GM12878 (cell line): ENCODE measurements at regions of chr4 and their contacts with region 1.

Region 1: DNA sequence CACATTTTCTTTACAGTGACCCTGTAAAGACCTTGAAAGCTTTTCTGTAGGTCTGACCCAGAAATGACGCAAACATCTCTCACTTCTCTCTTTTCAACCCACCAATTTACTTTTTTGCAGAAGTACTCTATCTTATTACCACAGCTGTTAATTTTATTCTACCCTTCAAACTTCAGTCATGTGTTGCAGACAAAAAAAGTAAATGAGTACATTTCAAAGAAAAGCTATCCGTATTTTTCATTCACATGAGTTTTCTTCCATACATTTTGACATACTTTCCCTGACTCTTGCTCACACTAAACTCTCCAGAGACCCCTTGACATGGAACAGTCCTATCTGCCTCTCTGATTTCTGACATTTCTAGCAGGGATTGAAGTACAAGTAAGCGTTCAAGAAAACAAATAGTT is 51.7 kb downstream of the SLC7A11 start:
- DNase-seq: peak; percentile 66
- ATAC-seq: peak; percentile 89
- H3K4me3 ChIP-seq: no peak overlapping the region
- H3K27ac ChIP-seq: peak overlapping the region; percentile 93
- H3K4me1 ChIP-seq: peaks cover 22% of the 10 kb centered on the region
- H3K27me3 ChIP-seq: no peaks in the 10 kb centered on the region
- CTCF ChIP-seq: no peak
- EP300 ChIP-seq: peak; percentile 98
- POLR2A ChIP-seq: no peak
- RAD21 ChIP-seq: no peak

Region 2: DNA sequence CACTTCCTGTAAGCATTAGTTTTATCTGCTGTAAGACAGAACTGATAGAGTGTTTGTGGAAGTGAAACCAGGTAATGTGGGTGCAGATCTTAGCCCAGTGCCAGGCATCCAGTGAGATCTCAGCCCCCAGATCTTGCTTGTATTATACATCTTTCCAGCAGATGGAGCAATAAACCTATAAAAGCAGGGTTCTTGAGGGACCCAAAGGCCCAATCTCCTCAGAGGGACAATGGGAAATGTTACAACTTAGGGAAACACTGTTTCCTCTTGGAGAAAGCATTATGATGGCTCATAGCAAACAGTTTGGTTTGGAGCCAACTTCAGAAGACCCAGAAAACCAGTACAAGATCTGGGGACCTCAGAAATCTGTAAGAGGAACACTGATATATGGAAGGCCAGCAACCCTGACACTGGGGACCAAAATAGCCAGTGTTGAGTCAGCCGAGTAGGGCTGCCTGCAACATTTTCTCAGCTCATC is 154.6 kb before region 1 on chr4:
- CTCF ChIA-PET with region 1: interaction called, 15 read pairs
- POLR2A ChIA-PET with region 1: no interaction called
- RAD21 ChIA-PET with region 1: interaction called, 4 read pairs
- SMC1A ChIA-PET with region 1: interaction called, 5 read pairs
- in situ Hi-C with region 1: no loop called
- intact Hi-C with region 1: no loop called
- DNase-seq: peak; percentile 69
- ATAC-seq: peak; percentile 100
- H3K4me3 ChIP-seq: no peak overlapping the region
- H3K27ac ChIP-seq: no peak overlapping the region
- H3K4me1 ChIP-seq: no peaks in the 10 kb centered on the region
- H3K27me3 ChIP-seq: no peaks in the 10 kb centered on the region
- CTCF ChIP-seq: peak; percentile 44 to 71 (median 64); a peak in 5 of 6 replicates
- EP300 ChIP-seq: 0 out of 4 replicates have a peak, but pooled peaks of 1 of the 2 experiments have one; percentile 43
- POLR2A ChIP-seq: no peak
- RAD21 ChIP-seq: peak; percentile 86

Region 3: GRCh38 chr4:138114434-138114833 is 76.0 kb before region 1 on chr4:
- CTCF ChIA-PET with region 1: no interaction called
- POLR2A ChIA-PET with region 1: no interaction called
- RAD21 ChIA-PET with region 1: no interaction called
- SMC1A ChIA-PET with region 1: no interaction called
- in situ Hi-C with region 1: no loop called
- intact Hi-C with region 1: loop called (anchors 5 kb)
- DNase-seq: peak; percentile 45
- ATAC-seq: peak; percentile 100
- H3K4me3 ChIP-seq: no peak overlapping the region
- H3K27ac ChIP-seq: no peak overlapping the region
- H3K4me1 ChIP-seq: peaks cover 11% of the 10 kb centered on the region
- H3K27me3 ChIP-seq: no peaks in the 10 kb centered on the region
- CTCF ChIP-seq: no peak
- EP300 ChIP-seq: 0 out of 4 replicates have a peak, but pooled peaks of 1 of the 2 experiments have one; percentile 46
- POLR2A ChIP-seq: no peak
- RAD21 ChIP-seq: no peak

Region 4: GRCh38 chr4:138235419-138235952 is 45.0 kb after region 1 on chr4:
- CTCF ChIA-PET with region 1: interaction called, 8 read pairs
- POLR2A ChIA-PET with region 1: interaction called, 20 read pairs
- RAD21 ChIA-PET with region 1: interaction called, 26 read pairs
- SMC1A ChIA-PET with region 1: interaction called, 68 read pairs
- in situ Hi-C with region 1: no loop called
- intact Hi-C with region 1: no loop called
- DNase-seq: no peak
- ATAC-seq: peak; percentile 58
- H3K4me3 ChIP-seq: no peak overlapping the region
- H3K27ac ChIP-seq: peak overlapping the region; percentile 20; the same call in 1 of the 2 replicates
- H3K4me1 ChIP-seq: no peaks in the 10 kb centered on the region
- H3K27me3 ChIP-seq: no peaks in the 10 kb centered on the region
- CTCF ChIP-seq: no peak
- EP300 ChIP-seq: no peak
- POLR2A ChIP-seq: no peak
- RAD21 ChIP-seq: no peak

Region 5: DNA sequence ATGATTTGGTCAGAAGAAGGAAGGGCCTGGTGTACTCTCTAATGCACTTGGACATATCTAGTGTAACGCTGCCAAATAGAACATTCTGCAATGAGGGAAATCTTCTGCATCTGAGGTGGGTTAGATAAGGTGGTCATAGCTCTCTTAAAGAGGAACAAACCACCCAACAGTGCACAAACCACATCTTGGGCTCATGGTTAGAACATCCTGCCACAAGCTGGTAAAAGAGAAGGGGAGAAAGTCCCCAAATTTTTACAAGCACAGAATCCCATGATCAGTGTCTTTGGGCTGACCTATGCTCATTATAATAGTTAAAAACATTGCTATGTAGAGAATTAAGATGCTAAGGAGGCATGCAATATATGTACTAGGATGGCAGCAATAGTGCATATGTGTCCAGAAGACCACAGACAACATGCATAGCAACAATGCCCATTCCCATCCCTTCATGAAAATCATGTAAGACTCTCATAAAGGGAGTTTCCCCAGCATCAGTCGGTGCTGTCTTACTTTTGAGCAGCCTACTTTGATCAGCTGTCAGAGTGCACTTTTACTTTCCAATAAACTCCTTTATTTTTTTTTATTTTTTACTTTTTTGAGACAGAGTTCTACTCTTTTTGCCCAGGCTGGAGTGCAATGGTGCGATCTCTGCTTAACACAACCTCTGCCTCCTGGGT is 151.4 kb after region 1 on chr4:
- CTCF ChIA-PET with region 1: interaction called, 3 read pairs
- POLR2A ChIA-PET with region 1: no interaction called
- RAD21 ChIA-PET with region 1: interaction called, 3 read pairs
- SMC1A ChIA-PET with region 1: interaction called, 6 read pairs
- in situ Hi-C with region 1: no loop called
- intact Hi-C with region 1: loop called (anchors 5 kb)
- DNase-seq: peak; percentile 72
- ATAC-seq: peak; percentile 91
- H3K4me3 ChIP-seq: no peak overlapping the region
- H3K27ac ChIP-seq: peak overlapping the region; percentile 46; the same call in 1 of the 2 replicates
- H3K4me1 ChIP-seq: peaks cover 7% of the 10 kb centered on the region
- H3K27me3 ChIP-seq: no peaks in the 10 kb centered on the region
- CTCF ChIP-seq: no peak
- EP300 ChIP-seq: no peak
- POLR2A ChIP-seq: no peak
- RAD21 ChIP-seq: no peak

Region 6: DNA sequence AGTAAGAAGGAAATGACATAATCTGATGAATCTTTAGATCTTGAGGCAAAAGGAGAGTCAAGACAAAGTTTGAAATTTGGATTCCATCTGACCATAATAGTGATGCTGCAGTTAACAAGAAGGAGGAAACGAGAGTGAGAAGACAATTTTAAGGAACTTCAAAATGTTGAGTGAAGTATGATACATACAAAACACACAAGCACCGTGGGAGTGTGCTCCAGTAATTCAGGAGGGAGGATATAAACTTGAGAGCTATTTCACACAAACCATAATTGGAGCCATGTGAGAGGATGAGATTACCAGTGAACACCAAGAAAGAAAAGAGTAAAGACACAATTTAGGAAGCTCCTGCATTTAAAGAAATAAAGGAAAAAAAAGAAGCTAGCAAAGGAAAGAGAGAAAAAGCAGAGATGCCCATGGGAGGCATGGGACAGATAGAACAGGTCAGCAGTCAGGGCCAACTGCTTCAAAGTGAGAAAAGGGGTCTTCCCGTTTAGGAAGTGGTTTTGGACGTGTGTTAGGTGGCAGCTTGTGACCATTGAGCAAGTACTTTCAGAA is 202.4 kb after region 1 on chr4:
- CTCF ChIA-PET with region 1: no interaction called
- POLR2A ChIA-PET with region 1: interaction called, 3 read pairs
- RAD21 ChIA-PET with region 1: interaction called, 7 read pairs
- SMC1A ChIA-PET with region 1: interaction called, 5 read pairs
- in situ Hi-C with region 1: no loop called
- intact Hi-C with region 1: loop called (anchors 5 kb)
- DNase-seq: peak; percentile 54
- ATAC-seq: peak; percentile 85
- H3K4me3 ChIP-seq: no peak overlapping the region
- H3K27ac ChIP-seq: peak overlapping the region; percentile 62
- H3K4me1 ChIP-seq: peaks cover 10% of the 10 kb centered on the region
- H3K27me3 ChIP-seq: no peaks in the 10 kb centered on the region
- CTCF ChIP-seq: no peak
- EP300 ChIP-seq: peak in 1 of 2 experiments; percentile 6; a peak in 1 of 4 replicates
- POLR2A ChIP-seq: no peak
- RAD21 ChIP-seq: no peak

Region 7: GRCh38 chr4:138405934-138406567 is 215.6 kb after region 1 on chr4:
- CTCF ChIA-PET with region 1: no interaction called
- POLR2A ChIA-PET with region 1: interaction called, 3 read pairs
- RAD21 ChIA-PET with region 1: interaction called, 7 read pairs
- SMC1A ChIA-PET with region 1: interaction called, 5 read pairs
- in situ Hi-C with region 1: no loop called
- intact Hi-C with region 1: loop called (anchors 5 kb)
- DNase-seq: peak; percentile 42
- ATAC-seq: peak; percentile 86
- H3K4me3 ChIP-seq: no peak overlapping the region
- H3K27ac ChIP-seq: peak overlapping the region; percentile 38; the same call in 1 of the 2 replicates
- H3K4me1 ChIP-seq: peaks cover 28% of the 10 kb centered on the region
- H3K27me3 ChIP-seq: no peaks in the 10 kb centered on the region
- CTCF ChIP-seq: no peak
- EP300 ChIP-seq: peak; percentile 68 to 83
- POLR2A ChIP-seq: no peak
- RAD21 ChIP-seq: no peak

Region 8: GRCh38 chr4:138609943-138610350 is 419.5 kb after region 1 on chr4:
- CTCF ChIA-PET with region 1: no interaction called
- POLR2A ChIA-PET with region 1: no interaction called
- RAD21 ChIA-PET with region 1: no interaction called
- SMC1A ChIA-PET with region 1: no interaction called
- in situ Hi-C with region 1: no loop called
- intact Hi-C with region 1: no loop called
- DNase-seq: no peak
- ATAC-seq: peak; percentile 66
- H3K4me3 ChIP-seq: no peak overlapping the region
- H3K27ac ChIP-seq: no peak overlapping the region
- H3K4me1 ChIP-seq: no peaks in the 10 kb centered on the region
- H3K27me3 ChIP-seq: no peaks in the 10 kb centered on the region
- CTCF ChIP-seq: no peak
- EP300 ChIP-seq: no peak
- POLR2A ChIP-seq: no peak
- RAD21 ChIP-seq: no peak